ENCODE measurements at regions of chr11 and their contacts with region 1.

Region 1: DNA sequence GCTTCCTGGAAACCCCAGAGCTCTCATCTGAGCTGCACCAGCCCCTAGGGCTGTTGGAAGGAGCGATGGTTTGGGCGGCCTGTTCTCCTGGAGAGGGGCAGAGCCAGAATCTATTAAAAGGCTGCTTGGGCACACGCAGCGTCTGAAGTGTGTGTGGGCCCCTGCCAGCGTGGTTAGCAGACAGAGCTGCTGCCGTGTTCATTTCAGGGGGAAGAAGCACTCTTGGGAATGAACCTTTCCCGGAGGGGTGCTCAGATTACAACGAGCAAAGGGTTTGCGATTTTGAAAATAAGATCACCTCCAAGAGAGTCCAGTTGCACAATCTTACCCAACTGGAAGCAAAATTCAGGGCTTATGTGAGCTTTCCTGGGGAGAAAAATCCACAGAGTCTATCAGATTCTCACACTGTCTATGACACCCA is 12.9 kb downstream of the ANO1 start:
- DNase-seq: peak; percentile 44 to 70
- ATAC-seq: peak; percentile 53 to 91 (median 81)
- H3K4me3 ChIP-seq: no peak overlapping the region
- H3K27ac ChIP-seq: peak overlapping the region in 6 of 10 donors; percentile 2 to 70 (median 24)
- H3K4me1 ChIP-seq: peaks cover 0 to 41% (median 10%) of the 10 kb centered on the region in 9 donors
- H3K27me3 ChIP-seq: peaks cover 0 to 5% (median 0%) of the 10 kb centered on the region in 7 donors
- CTCF ChIP-seq: no peak

Region 2: GRCh38 chr11:69925366-69926196 is 165.4 kb before region 1 on chr11:
- intact Hi-C with region 1: loop called in 2 of 10 experiments (anchors 10 kb)
- DNase-seq: no peak
- ATAC-seq: peak in 1 of 8 donors; percentile 5
- H3K4me3 ChIP-seq: no peak overlapping the region
- H3K27ac ChIP-seq: peak overlapping the region in 5 of 10 donors; percentile 16 to 52 (median 25)
- H3K4me1 ChIP-seq: peaks cover 0 to 12% (median 0%) of the 10 kb centered on the region in 9 donors
- H3K27me3 ChIP-seq: peaks cover 0 to 55% (median 42%) of the 10 kb centered on the region in 7 donors
- CTCF ChIP-seq: no peak

Region 3: DNA sequence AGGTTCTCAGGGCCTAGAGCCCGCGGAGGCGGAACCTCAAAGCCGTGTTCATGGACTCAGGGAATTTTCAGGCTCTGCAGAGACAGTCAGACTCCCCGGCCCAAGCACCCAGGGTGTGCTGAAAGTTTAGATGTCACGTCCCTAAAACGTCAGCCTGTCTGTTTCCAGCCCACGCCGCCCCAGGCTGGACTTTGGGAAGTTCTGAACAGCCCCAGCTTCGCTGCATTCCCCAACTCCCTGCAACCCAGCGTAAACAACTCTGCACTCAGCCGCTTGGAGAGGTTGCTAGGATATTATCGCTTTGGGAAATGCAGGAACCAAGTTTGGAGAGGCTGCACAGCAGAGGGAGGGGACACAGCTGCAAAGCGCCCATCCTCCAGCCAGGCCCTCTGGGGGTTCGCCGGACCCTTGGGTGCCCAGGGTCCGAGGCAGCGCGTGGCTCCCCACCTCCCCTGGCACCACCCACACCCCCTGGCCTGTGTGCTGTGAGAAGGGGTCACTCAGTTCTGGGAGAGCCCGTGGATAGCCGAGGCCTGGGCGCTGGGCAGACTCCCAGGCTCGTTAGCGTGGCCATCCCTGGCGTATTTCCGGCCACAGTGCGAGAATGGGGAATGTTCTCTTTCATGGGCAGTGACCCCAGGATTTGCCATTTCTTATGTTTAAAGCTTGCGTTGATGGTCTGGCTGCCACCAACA is 151.3 kb before region 1 on chr11:
- intact Hi-C with region 1: loop called in 1 of 10 experiments (anchors 10 kb)
- DNase-seq: peak; percentile 73 to 86
- ATAC-seq: peak; percentile 87 to 93 (median 92)
- H3K4me3 ChIP-seq: peak overlapping the region in 7 of 10 donors; percentile 12 to 41 (median 36)
- H3K27ac ChIP-seq: peak overlapping the region; percentile 49 to 92 (median 84)
- H3K4me1 ChIP-seq: peaks cover 0 to 25% (median 14%) of the 10 kb centered on the region in 9 donors
- H3K27me3 ChIP-seq: peaks cover 0 to 13% (median 0%) of the 10 kb centered on the region in 7 donors
- CTCF ChIP-seq: no peak